ENCODE measurements at regions of chr20 and their contacts with region 1.

Region 1: GRCh38 chr20:438571-439469 is 23.5 kb downstream of the TBC1D20 start:
- DNase-seq: peak; percentile 28 to 86 (median 54)
- ATAC-seq: peak; percentile 85
- H3K4me3 ChIP-seq: peak overlapping the region; percentile 37
- H3K4me3 Mint-ChIP-seq: peak overlapping the region; percentile 71
- H3K27ac ChIP-seq: no peak overlapping the region
- H3K27ac Mint-ChIP-seq: peak overlapping the region; percentile 49
- H3K4me1 ChIP-seq: peaks cover 51% of the 10 kb centered on the region
- H3K4me1 Mint-ChIP-seq: peaks cover 56% of the 10 kb centered on the region
- H3K27me3 ChIP-seq: no peaks in the 10 kb centered on the region
- H3K27me3 Mint-ChIP-seq: no peaks in the 10 kb centered on the region
- CTCF ChIP-seq: no peak

Region 2: GRCh38 chr20:543369-544152 is 104.7 kb after region 1 on chr20 and contains the start of gene CSNK2A1:
- CTCF ChIA-PET with region 1: no interaction called
- POLR2A ChIA-PET with region 1: interaction called, 11 read pairs
- intact Hi-C with region 1: no loop called
- DNase-seq: peak; percentile 91 to 98 (median 96)
- ATAC-seq: peak; percentile 91
- H3K4me3 ChIP-seq: peak within 1 kb of the TSS; percentile 88
- H3K4me3 Mint-ChIP-seq: peak within 1 kb of the TSS; percentile 100
- H3K27ac ChIP-seq: peak within 1 kb of the TSS; percentile 83 to 98
- H3K27ac Mint-ChIP-seq: peak within 1 kb of the TSS; percentile 99
- H3K4me1 ChIP-seq: peaks cover 32% of the 10 kb centered on the region
- H3K4me1 Mint-ChIP-seq: peaks cover 54% of the 10 kb centered on the region
- H3K27me3 ChIP-seq: no peaks in the 10 kb centered on the region
- H3K27me3 Mint-ChIP-seq: peaks cover 12% of the 10 kb centered on the region
- CTCF ChIP-seq: no peak
- total RNA-seq, gene CSNK2A1: 55.5 to 56.9 TPM